PC-3 (cell line): ENCODE measurements at regions of chr15 and their contacts with region 1.

Region 1: DNA sequence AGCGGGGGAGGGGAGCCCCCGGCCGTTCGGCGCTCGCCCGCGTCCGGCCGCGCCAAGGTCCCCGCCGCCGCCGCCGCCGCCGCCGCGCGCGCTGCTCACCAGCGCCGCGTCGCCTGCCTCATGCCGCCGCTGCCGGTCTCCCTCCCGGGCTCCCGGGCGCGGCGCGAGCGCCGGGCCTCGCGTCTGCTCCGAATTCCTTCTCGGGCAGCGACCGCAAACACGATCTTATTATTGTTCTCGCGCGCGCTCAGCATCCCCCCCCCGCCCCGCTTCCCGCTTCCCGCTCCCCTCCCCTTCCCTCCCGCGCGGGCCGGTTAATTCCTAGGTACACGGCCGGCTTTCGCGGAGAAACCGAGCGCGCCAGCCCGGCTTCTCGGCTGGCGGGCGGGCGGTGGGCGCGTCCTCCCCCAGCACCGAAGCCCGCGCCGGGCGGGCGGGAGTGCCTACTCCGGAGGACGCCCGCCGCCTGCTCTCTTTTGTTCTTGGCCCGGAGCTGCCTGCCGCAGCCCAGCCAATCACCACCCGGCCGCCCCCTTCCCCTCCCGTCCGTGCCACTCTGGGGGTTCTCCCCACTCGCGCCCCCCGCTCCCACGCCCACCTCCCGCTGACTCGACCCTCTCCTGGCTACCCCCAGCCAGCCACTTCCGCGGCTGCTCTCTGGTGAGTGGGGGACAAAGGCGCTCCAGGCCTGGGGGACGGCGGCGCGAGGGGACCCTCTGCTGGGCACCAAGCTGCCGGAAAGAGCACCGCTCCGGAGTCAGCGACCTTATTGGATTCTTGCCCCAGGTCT is at the start of gene HDGFL3:
- DNase-seq: peak; percentile 59
- ATAC-seq: peak; percentile 38
- H3K4me3 ChIP-seq: peak within 1 kb of the TSS; percentile 83
- H3K27ac ChIP-seq: no peak within 1 kb of the TSS
- H3K4me1 ChIP-seq: peaks cover 29% of the 10 kb centered on the region
- H3K27me3 ChIP-seq: no peaks in the 10 kb centered on the region
- CTCF ChIP-seq: peak; percentile 35; the same call in 1 of the 2 replicates
- total RNA-seq, gene HDGFL3: 38.4 and 49.4 TPM in 2 replicates

Region 2: GRCh38 chr15:83011271-83012075 is 196.3 kb before region 1 on chr15 and contains the start of gene C15orf40:
- CTCF ChIA-PET with region 1: no interaction called
- POLR2A ChIA-PET with region 1: interaction called, 3 read pairs
- intact Hi-C with region 1: loop called (anchors 2 kb)
- DNase-seq: peak; percentile 90
- ATAC-seq: peak; percentile 89
- H3K4me3 ChIP-seq: peak within 1 kb of the TSS; percentile 92
- H3K27ac ChIP-seq: peak within 1 kb of the TSS; percentile 44
- H3K4me1 ChIP-seq: peaks cover 20% of the 10 kb centered on the region
- H3K27me3 ChIP-seq: no peaks in the 10 kb centered on the region
- CTCF ChIP-seq: peak; percentile 72
- total RNA-seq, gene C15orf40: 10.3 and 25.8 TPM in 2 replicates

Region 3: GRCh38 chr15:83066734-83067637 is 140.8 kb before region 1 on chr15 and contains the start of gene BTBD1:
- CTCF ChIA-PET with region 1: interaction called, 5 read pairs
- POLR2A ChIA-PET with region 1: no interaction called
- intact Hi-C with region 1: loop called (anchors 5 kb)
- DNase-seq: peak; percentile 97
- ATAC-seq: peak; percentile 94
- H3K4me3 ChIP-seq: peak within 1 kb of the TSS; percentile 79
- H3K27ac ChIP-seq: peak within 1 kb of the TSS; percentile 63
- H3K4me1 ChIP-seq: peaks cover 20% of the 10 kb centered on the region
- H3K27me3 ChIP-seq: no peaks in the 10 kb centered on the region
- CTCF ChIP-seq: no peak
- total RNA-seq, gene BTBD1: 83.9 and 109 TPM in 2 replicates

Region 4: GRCh38 chr15:83153288-83153687 is 54.5 kb before region 1 on chr15:
- CTCF ChIA-PET with region 1: no interaction called
- POLR2A ChIA-PET with region 1: no interaction called
- intact Hi-C with region 1: loop called (anchors 5 kb)
- DNase-seq: peak; percentile 43
- ATAC-seq: peak; percentile 57
- H3K4me3 ChIP-seq: no peak overlapping the region
- H3K27ac ChIP-seq: no peak overlapping the region
- H3K4me1 ChIP-seq: peaks cover 12% of the 10 kb centered on the region
- H3K27me3 ChIP-seq: no peaks in the 10 kb centered on the region
- CTCF ChIP-seq: no peak